HEK293T (cell line): ENCODE measurements at regions of chr5 and their contacts with region 1.

Region 1: DNA sequence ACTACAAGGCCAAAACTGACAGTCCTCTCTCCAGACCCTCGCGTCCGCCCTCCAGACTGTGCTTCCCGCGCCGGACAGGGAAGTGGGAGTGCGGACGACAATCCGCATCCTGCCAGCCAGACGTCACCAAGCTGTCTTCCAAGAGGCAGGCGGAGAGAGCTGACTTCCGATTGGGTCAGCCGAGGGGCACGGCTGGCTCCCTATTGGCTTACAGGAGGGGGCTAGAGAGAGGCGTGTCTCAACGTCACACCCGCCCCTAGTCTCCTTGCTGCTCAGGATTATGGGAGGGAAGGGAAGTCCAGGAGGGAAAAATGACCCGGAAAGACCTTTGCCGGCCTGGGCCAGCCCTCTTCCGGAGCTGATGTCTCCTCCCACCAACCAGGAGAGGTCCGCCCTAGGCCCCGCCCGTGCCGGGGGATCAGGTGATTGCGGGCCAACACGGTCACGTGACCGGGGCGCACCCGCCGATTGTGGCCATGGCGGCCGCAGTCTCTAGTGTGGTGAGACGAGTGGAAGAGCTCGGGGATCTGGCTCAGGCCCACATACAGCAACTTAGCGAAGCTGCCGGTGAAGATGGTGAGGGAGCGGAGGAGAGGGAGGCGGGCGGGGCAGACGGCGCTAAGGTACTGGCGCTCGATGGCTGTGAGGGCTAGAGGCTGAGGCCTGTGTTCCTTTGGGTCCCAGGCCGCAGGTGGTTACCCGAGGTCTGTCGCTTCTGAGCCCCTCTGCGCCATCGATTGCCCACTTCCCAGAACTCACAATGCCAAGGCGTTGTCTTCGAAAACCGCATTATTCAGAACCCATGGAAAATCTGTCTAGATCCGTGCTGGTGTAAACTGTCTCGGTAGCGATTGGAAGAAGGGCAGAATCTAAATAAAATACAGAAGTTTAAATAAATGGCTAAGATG is at the start of gene RIMOC1:
- DNase-seq: peak; percentile 95

Region 2: DNA sequence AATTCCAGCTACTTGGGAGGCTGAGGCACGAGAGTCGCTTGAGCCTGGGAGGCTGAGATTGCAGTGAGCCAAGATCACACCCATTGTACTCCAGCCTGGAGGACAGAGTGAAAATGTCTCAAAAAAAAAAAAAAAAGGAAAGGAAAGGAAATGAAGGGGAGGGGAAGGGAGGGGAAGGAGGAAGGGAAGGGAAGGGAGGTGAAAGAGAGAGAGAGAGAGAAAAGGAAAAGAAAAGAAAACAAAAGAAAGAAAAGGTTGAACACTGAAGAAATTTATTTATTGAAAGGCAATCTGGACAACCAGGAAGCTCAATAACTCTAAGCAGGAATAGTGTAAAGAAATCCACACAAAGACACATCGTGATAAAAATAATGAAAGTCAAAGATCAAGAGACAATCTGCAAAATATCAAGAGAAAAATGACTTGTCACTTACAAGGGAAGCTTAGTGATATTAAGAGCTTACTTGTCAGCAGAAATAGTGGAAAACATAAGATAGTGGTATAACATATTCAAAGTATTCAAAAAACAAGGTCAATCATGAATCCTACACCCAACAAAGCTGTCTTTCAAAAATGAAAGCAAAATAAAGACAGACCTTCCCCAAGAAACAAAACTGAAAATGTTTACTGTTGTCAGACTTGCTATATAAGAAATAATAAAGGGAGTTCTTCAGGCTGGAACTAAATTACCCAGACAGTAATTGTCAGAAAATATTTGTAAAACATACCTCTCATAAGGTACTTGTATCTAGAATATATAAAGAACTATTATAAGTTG is 10.9 kb before region 1 on chr5:
- CTCF ChIA-PET with region 1: no interaction called
- POLR2A ChIA-PET with region 1: interaction called, 13 read pairs
- DNase-seq: no peak

Region 3: GRCh38 chr5:41924872-41925554 is 20.9 kb after region 1 on chr5 and contains the start of gene FBXO4:
- CTCF ChIA-PET with region 1: no interaction called
- POLR2A ChIA-PET with region 1: interaction called, 22 read pairs
- DNase-seq: peak; percentile 74